H1 (cell line): ENCODE measurements at regions of chr2 and their contacts with region 1.

Region 1: DNA sequence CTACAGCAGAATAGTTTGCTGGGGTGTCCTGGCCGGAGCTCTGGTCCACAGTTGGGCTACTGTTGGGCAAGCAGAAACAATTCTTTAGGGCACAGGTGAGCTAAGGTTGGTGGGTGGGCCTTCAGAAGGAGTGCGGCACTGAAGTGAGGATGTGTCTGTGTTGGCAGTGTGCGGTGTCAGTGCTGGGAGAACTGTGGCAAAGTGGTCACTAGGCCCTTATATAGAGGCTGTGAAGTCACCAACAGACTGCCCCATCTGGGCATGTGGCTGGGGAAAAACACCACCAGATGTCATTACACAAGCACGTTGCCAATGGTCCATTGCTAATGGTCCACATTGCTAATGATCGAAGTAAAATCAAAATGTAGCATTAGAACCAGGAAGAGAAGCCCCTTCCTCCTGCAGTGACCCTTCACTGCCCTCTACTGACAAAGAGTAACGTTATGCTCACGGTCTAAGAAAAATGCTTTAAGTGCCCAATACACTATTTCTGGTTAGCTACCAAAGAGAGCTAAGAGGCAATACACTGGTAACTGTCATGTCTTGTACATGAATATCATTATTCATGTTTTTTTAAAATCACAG is 21.3 kb downstream of the SCN1A start:
- DNase-seq: no peak
- H3K4me3 ChIP-seq: no peak overlapping the region
- H3K27ac ChIP-seq: no peak overlapping the region
- H3K4me1 ChIP-seq: no peaks in the 10 kb centered on the region
- H3K27me3 ChIP-seq: no peaks in the 10 kb centered on the region
- CTCF ChIP-seq: peak in 2 of 3 experiments; percentile 73 to 82; a peak in 3 of 4 replicates
- EP300 ChIP-seq: no peak
- POLR2A ChIP-seq: no peak
- RAD21 ChIP-seq: peak; percentile 84 to 85

Region 2: GRCh38 chr2:165953655-165954606 is 152.6 kb before region 1 on chr2 and contains the start of gene TTC21B:
- CTCF ChIA-PET with region 1: interaction called, 11 read pairs
- POLR2A ChIA-PET with region 1: no interaction called
- DNase-seq: peak; percentile 80 to 94
- H3K4me3 ChIP-seq: peak within 1 kb of the TSS; percentile 69 to 87 (median 74)
- H3K27ac ChIP-seq: peak within 1 kb of the TSS; percentile 90
- H3K4me1 ChIP-seq: peaks cover 0 to 2% (median 0%) of the 10 kb centered on the region in 4 experiments; a peak in 2 of 7 replicates
- H3K27me3 ChIP-seq: no peaks in the 10 kb centered on the region
- CTCF ChIP-seq: peak; percentile 53 to 85 (median 72)
- EP300 ChIP-seq: peak in 1 of 2 experiments; percentile 10; a peak in 1 of 3 replicates
- POLR2A ChIP-seq: peak in 1 of 2 experiments; percentile 66; a peak in 2 of 3 replicates
- RAD21 ChIP-seq: peak; percentile 57
- total RNA-seq, gene TTC21B: 20.8 and 23.9 TPM in 2 replicates